ENCODE measurements at regions of chr3 and their contacts with region 1.

Region 1: DNA sequence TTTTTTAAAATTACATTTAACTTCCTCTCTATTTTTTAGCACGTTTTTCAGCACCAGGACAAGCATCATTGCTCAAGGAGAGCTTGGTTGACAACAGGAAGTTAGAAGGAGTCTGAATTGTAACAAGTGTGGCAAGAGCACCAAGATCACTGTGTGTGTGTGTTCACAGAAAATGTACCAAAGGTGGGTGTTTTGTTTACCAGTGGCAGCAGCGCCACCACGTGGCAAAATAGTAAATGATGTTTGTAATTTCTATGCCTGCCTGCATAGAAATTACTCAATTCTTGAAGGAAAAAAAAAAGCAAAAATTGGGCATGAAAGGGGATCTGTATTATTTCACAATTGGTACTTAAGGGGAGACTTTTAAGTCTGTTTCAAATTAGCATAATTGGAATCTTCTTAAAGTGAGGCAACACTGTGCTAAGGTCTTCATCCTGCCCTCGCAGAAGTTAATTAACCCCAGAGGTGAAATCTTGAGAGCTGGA is 7.4 kb upstream of the U2SURP start:
- DNase-seq: peak in 8 of 9 donors; percentile 35 to 63 (median 51)
- ATAC-seq: peak; percentile 85
- H3K4me3 ChIP-seq: no peak overlapping the region
- H3K4me3 Mint-ChIP-seq: no peak overlapping the region
- H3K27ac ChIP-seq: no peak overlapping the region
- H3K27ac Mint-ChIP-seq: peak overlapping the region in 2 of 9 donors; percentile 6 to 10
- H3K4me1 ChIP-seq: no peaks in the 10 kb centered on the region
- H3K4me1 Mint-ChIP-seq: peaks cover 0 to 8% (median 6%) of the 10 kb centered on the region in 7 donors
- H3K27me3 ChIP-seq: no peaks in the 10 kb centered on the region
- H3K27me3 Mint-ChIP-seq: peaks cover 0 to 28% (median 10%) of the 10 kb centered on the region in 5 donors

Region 2: GRCh38 chr3:142586803-142587406 is 407.1 kb before region 1 on chr3:
- CTCF ChIA-PET with region 1: interaction called, 3 read pairs
- POLR2A ChIA-PET with region 1: interaction called, 3 read pairs
- intact Hi-C with region 1: loop called (anchors 1 kb)
- DNase-seq: peak in 7 of 9 donors; percentile 15 to 51 (median 28)
- ATAC-seq: peak; percentile 74
- H3K4me3 ChIP-seq: no peak overlapping the region
- H3K4me3 Mint-ChIP-seq: no peak overlapping the region
- H3K27ac ChIP-seq: no peak overlapping the region
- H3K27ac Mint-ChIP-seq: no peak overlapping the region
- H3K4me1 ChIP-seq: no peaks in the 10 kb centered on the region
- H3K4me1 Mint-ChIP-seq: no peaks in the 10 kb centered on the region
- H3K27me3 ChIP-seq: no peaks in the 10 kb centered on the region
- H3K27me3 Mint-ChIP-seq: peaks cover 6 to 49% (median 16%) of the 10 kb centered on the region in 5 donors

Region 3: GRCh38 chr3:142828703-142829305 is 165.2 kb before region 1 on chr3:
- CTCF ChIA-PET with region 1: no interaction called
- POLR2A ChIA-PET with region 1: no interaction called
- intact Hi-C with region 1: loop called (anchors 1 to 2 kb)
- DNase-seq: peak in 8 of 9 donors; percentile 1 to 59 (median 18)
- ATAC-seq: peak; percentile 92
- H3K4me3 ChIP-seq: no peak overlapping the region
- H3K4me3 Mint-ChIP-seq: no peak overlapping the region
- H3K27ac ChIP-seq: no peak overlapping the region
- H3K27ac Mint-ChIP-seq: no peak overlapping the region
- H3K4me1 ChIP-seq: no peaks in the 10 kb centered on the region
- H3K4me1 Mint-ChIP-seq: peaks cover 0 to 3% (median 0%) of the 10 kb centered on the region in 7 donors
- H3K27me3 ChIP-seq: no peaks in the 10 kb centered on the region
- H3K27me3 Mint-ChIP-seq: peaks cover 2 to 22% (median 5%) of the 10 kb centered on the region in 5 donors

Region 4: GRCh38 chr3:142929109-142929508 is 64.9 kb before region 1 on chr3:
- CTCF ChIA-PET with region 1: no interaction called
- POLR2A ChIA-PET with region 1: no interaction called
- intact Hi-C with region 1: loop called in 1 of 2 experiments (anchors 1 kb)
- DNase-seq: peak in 2 of 9 donors; percentile 9 to 12
- ATAC-seq: peak; percentile 71
- H3K4me3 ChIP-seq: no peak overlapping the region
- H3K4me3 Mint-ChIP-seq: no peak overlapping the region
- H3K27ac ChIP-seq: no peak overlapping the region
- H3K27ac Mint-ChIP-seq: no peak overlapping the region
- H3K4me1 ChIP-seq: no peaks in the 10 kb centered on the region
- H3K4me1 Mint-ChIP-seq: no peaks in the 10 kb centered on the region
- H3K27me3 ChIP-seq: no peaks in the 10 kb centered on the region
- H3K27me3 Mint-ChIP-seq: peaks cover 15 to 42% (median 33%) of the 10 kb centered on the region in 5 donors

Region 5: GRCh38 chr3:143016321-143016972 is 22.4 kb after region 1 on chr3:
- CTCF ChIA-PET with region 1: no interaction called
- POLR2A ChIA-PET with region 1: no interaction called
- intact Hi-C with region 1: no loop called
- DNase-seq: peak in 4 of 9 donors; percentile 6 to 22 (median 12)
- ATAC-seq: peak; percentile 55
- H3K4me3 ChIP-seq: no peak overlapping the region
- H3K4me3 Mint-ChIP-seq: no peak overlapping the region
- H3K27ac ChIP-seq: no peak overlapping the region
- H3K27ac Mint-ChIP-seq: no peak overlapping the region
- H3K4me1 ChIP-seq: no peaks in the 10 kb centered on the region
- H3K4me1 Mint-ChIP-seq: peaks cover 4 to 32% (median 21%) of the 10 kb centered on the region in 7 donors
- H3K27me3 ChIP-seq: no peaks in the 10 kb centered on the region
- H3K27me3 Mint-ChIP-seq: no peaks in the 10 kb centered on the region

Region 6: GRCh38 chr3:143697978-143698377 is 704.0 kb after region 1 on chr3:
- CTCF ChIA-PET with region 1: no interaction called
- POLR2A ChIA-PET with region 1: no interaction called
- intact Hi-C with region 1: no loop called
- DNase-seq: no peak
- ATAC-seq: no peak
- H3K4me3 ChIP-seq: no peak overlapping the region
- H3K4me3 Mint-ChIP-seq: no peak overlapping the region
- H3K27ac ChIP-seq: no peak overlapping the region
- H3K27ac Mint-ChIP-seq: no peak overlapping the region
- H3K4me1 ChIP-seq: no peaks in the 10 kb centered on the region
- H3K4me1 Mint-ChIP-seq: peaks cover 0 to 19% (median 0%) of the 10 kb centered on the region in 7 donors
- H3K27me3 ChIP-seq: no peaks in the 10 kb centered on the region
- H3K27me3 Mint-ChIP-seq: no peaks in the 10 kb centered on the region